SK-N-SH (cell line): ENCODE measurements at regions of chr19 and their contacts with region 1.

Region 1: DNA sequence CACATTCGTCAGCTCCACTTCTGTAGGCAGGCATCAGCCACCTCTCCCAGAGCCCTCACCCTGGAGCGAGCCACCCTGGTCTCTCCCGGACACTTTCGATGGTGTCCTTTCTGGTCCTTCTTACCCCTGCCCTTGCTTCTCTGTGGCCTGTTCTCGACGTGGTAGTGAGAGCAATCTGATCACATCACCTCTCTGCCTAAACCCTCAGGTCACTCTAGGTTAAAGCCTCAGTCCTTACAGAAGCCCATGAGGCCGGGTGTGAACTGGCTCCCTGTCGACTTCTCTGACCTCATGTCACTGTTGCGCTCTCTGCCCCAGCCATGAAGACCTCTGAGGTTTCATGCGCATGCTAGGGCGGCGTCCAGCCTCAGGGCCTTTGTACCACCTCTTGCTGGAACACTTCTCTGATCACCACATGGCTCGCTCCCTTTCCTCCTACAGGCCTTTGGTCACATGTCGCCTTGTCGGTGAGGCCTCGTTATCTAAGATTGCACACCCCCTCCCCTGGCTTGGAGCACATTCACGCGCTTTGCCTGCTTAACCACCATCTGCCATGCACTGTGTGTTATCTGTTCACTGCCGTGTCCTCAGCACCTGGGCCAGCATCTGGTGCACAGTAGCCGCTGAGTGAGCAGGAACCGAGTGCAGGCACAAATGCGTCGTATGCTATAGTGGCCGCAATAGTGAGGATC is 101.5 kb downstream of the DPF1 start:
- DNase-seq: no peak
- H3K4me3 ChIP-seq: no peak overlapping the region
- H3K27ac ChIP-seq: no peak overlapping the region
- H3K4me1 ChIP-seq: no peaks in the 10 kb centered on the region
- H3K27me3 ChIP-seq: no peaks in the 10 kb centered on the region
- CTCF ChIP-seq: no peak
- EP300 ChIP-seq: no peak
- RAD21 ChIP-seq: no peak

Region 2: DNA sequence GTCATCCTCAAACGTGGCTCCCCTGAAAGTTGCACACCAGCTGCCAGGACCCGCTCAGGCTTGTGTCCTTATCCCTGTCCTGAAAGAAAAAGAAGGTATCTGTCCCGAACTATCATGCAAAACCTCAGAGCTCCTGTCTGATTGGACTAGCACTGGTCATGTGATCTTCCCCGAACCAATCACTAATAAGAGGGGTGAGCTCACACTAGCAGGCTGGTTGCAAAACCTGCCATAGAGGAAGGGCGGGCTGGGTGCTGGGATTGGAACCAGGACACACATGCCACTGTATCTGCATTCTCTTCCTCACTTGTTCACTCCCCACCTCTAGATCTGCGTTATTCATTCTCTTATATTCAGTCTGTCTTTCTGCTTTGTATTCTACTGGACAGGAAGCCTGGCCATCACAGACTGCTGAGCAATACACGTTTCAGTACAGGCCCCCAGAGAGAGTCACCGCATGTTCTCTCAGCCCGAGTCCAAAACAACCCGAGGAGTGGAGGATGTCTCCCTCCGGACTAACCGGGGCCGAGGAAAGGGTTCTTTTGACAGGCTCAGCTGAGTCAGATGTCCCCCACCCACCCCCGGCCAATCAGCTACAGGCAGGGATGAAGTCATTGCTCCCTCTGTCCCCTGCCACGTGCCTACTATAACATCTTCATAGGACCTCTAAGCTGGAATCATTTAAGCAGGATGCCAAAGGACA is 117.9 kb before region 1 on chr19:
- CTCF ChIA-PET with region 1: no interaction called
- POLR2A ChIA-PET with region 1: interaction called, 11 read pairs
- DNase-seq: peak; percentile 89
- H3K4me3 ChIP-seq: peak overlapping the region; percentile 46 to 57
- H3K27ac ChIP-seq: peak overlapping the region; percentile 98 to 100
- H3K4me1 ChIP-seq: peaks cover 25 to 32% of the 10 kb centered on the region in 2 experiments
- H3K27me3 ChIP-seq: no peaks in the 10 kb centered on the region
- CTCF ChIP-seq: no peak
- EP300 ChIP-seq: no peak
- RAD21 ChIP-seq: no peak